A673 (cell line): ENCODE measurements at regions of chr10 and their contacts with region 1.

Region 1: DNA sequence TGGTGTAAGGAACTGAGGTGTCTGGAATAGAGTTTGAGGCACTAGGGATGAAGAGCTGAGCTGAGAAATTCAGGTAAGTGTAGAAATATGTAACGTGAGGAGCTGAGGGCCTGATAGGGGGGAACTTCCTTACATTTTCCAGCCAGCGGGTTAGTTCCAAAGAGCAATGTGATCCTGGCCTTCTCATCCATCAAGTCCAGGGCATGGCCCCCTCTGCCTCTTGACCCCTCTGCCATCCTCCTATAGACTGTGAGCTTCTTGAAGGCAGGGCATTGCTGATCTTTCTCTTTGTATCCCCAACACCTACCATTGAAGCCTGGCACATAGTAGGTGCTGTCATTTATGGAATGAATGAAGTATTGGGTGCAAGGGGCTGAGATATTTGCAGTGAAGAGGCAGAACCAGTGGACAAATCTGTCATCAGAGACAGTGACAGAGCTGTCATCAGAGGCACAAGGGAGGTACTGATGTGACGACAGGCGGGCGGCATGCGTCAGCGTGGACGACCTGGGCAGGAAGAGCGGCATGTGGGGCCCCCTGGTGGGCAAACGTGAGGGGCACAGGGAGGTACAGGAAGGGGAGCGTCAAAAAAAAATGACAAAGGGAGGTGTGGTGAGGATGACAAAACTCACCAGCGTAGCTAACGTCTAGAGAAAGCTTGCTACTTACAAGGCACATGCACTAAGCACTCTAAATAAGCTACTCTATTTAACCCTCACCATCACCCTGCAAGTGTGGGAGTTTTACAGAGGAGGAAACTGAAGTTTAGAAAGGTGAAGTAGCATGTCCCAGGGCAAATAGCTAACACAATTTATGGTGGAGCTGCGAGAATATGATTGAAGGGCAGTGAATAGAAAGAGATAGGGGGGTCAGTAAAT is 5.2 kb upstream of the CAMK2G start:
- DNase-seq: peak; percentile 93
- H3K4me3 ChIP-seq: no peak overlapping the region
- H3K27ac ChIP-seq: no peak overlapping the region
- H3K4me1 ChIP-seq: no peaks in the 10 kb centered on the region
- H3K27me3 ChIP-seq: no peaks in the 10 kb centered on the region
- CTCF ChIP-seq: peak; percentile 98

Region 2: DNA sequence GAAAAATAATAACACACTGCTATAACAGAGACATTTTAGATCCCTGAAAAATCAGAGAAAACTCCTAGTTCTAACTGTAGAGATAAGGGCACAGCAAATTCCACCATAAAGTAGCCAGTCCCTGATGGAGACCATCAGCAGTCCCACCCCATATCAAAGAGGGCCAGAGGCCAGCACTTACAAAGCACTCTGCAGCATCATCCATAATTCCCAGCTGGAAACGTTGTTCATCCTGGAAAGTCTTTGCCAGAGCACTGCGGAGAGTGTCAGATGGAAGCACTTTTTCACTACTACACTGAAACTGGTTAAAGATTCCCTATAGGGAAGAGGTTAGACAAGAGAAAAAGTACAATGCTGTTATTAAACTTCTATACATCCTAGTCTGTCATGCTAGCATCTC is 334.2 kb before region 1 on chr10:
- CTCF ChIA-PET with region 1: no interaction called
- POLR2A ChIA-PET with region 1: no interaction called
- intact Hi-C with region 1: no loop called
- DNase-seq: no peak
- H3K4me3 ChIP-seq: no peak overlapping the region
- H3K27ac ChIP-seq: no peak overlapping the region
- H3K4me1 ChIP-seq: no peaks in the 10 kb centered on the region
- H3K27me3 ChIP-seq: no peaks in the 10 kb centered on the region
- CTCF ChIP-seq: no peak

Region 3: DNA sequence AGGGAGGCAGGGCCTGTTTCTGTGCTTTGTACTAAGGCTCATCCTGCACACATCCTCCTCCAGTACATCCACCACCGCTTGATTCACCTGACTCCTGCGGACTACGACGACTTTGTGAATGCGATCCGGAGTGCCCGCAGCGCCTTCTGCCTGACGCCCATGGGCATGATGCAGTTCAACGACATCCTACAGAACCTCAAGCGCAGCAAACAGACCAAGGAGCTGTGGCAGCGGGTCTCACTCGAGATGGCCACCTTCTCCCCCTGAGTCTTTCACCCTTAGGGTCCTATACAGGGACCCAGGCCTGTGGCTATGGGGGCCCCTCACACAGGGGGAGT is 78.3 kb before region 1 on chr10:
- CTCF ChIA-PET with region 1: interaction called, 13 read pairs
- POLR2A ChIA-PET with region 1: no interaction called
- intact Hi-C with region 1: no loop called
- DNase-seq: no peak
- H3K4me3 ChIP-seq: no peak overlapping the region
- H3K27ac ChIP-seq: no peak overlapping the region
- H3K4me1 ChIP-seq: no peaks in the 10 kb centered on the region
- H3K27me3 ChIP-seq: no peaks in the 10 kb centered on the region
- CTCF ChIP-seq: no peak

Region 4: DNA sequence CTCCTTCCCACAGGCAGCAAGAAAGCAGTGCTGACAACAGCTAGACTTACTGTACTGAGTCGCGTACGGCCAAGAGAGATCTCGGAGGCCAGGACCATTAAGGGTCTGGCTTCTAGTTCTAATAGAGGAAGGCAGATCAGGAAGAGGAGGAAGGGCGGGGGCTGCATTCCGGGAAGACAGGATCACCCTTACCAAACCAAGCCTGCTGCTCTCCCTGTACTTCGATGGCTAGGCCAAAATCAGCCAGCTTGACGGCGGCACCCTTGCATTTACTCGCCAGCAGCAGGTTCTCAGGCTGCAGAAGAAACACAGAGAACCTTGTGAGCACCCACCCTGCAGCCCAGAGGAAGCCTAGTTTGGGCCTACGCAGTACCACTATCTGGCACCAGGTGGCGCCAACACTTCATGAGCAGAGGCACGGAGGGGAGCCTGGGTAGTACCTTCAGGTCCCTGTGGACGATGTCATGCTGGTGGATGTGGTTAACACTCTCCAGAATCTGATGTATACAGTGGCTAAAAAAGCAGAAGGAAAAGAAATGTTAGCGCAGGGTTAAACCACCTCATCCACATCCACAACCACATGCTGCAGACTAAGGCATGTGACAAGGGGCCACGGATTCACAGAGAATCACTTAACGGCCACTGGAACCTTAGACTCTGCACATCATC is 30.6 kb before region 1 on chr10:
- CTCF ChIA-PET with region 1: interaction called, 5 read pairs
- POLR2A ChIA-PET with region 1: no interaction called
- intact Hi-C with region 1: loop called (anchors 1 kb)
- DNase-seq: peak; percentile 86
- H3K4me3 ChIP-seq: no peak overlapping the region
- H3K27ac ChIP-seq: no peak overlapping the region
- H3K4me1 ChIP-seq: peaks cover 6% of the 10 kb centered on the region
- H3K27me3 ChIP-seq: no peaks in the 10 kb centered on the region
- CTCF ChIP-seq: peak; percentile 99